Caco-2 (cell line): ENCODE measurements at regions of chr7 and their contacts with region 1.

Region 1: DNA sequence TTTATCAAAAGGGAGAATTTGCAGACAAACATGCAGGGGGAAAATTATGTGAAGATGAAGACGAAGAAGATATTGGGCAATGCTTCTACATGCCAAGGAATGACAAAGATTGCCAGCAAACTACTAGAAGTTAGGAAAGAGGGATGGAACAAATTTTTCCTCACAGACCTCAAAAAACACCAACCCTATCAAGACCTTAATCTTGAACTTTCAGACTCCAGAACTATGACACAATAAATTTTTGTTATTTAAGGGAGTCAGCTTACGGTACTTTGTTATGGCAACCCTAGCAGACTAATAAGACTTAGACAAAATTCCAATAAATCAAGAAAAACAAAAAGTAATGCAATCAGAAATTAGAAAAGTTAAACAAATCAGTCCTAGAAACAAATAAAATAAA is 280.0 kb upstream of the GNAI1 start:
- DNase-seq: no peak
- H3K4me3 ChIP-seq: no peak overlapping the region
- H3K4me3 Mint-ChIP-seq: no peak overlapping the region
- H3K27ac Mint-ChIP-seq: no peak overlapping the region
- H3K4me1 ChIP-seq: no peaks in the 10 kb centered on the region
- H3K4me1 Mint-ChIP-seq: no peaks in the 10 kb centered on the region
- H3K27me3 ChIP-seq: no peaks in the 10 kb centered on the region
- H3K27me3 Mint-ChIP-seq: no peaks in the 10 kb centered on the region
- CTCF ChIP-seq: no peak

Region 2: GRCh38 chr7:80107278-80107677 is 252.7 kb after region 1 on chr7:
- CTCF ChIA-PET with region 1: interaction called, 11 read pairs
- POLR2A ChIA-PET with region 1: no interaction called
- intact Hi-C with region 1: no loop called
- DNase-seq: no peak
- H3K4me3 ChIP-seq: no peak overlapping the region
- H3K4me3 Mint-ChIP-seq: no peak overlapping the region
- H3K27ac Mint-ChIP-seq: no peak overlapping the region
- H3K4me1 ChIP-seq: no peaks in the 10 kb centered on the region
- H3K4me1 Mint-ChIP-seq: peaks cover 6% of the 10 kb centered on the region
- H3K27me3 ChIP-seq: no peaks in the 10 kb centered on the region
- H3K27me3 Mint-ChIP-seq: no peaks in the 10 kb centered on the region
- CTCF ChIP-seq: no peak